Activated T-helper 2 cell treated with anti-CD3 and anti-CD28 coated beads, Interferon-gamma antibody, Interleukin-2, Interleukin-4, amounts not matched to agents 10 μg/mL and 5 μg/mL and 100 μg/mL, durations not matched to agents 14 hours and 24 hours and 36 hours (primary cell): ENCODE measurements at regions of chr3 and their contacts with region 1.

Region 1: GRCh38 chr3:189419038-189419437 is 212.2 kb upstream of the TP63 start:
- DNase-seq: no peak
- H3K4me3 Mint-ChIP-seq: no peak overlapping the region
- H3K27ac Mint-ChIP-seq: no peak overlapping the region
- H3K4me1 Mint-ChIP-seq: peaks cover 37% of the 10 kb centered on the region
- H3K27me3 Mint-ChIP-seq: no peaks in the 10 kb centered on the region

Region 2: DNA sequence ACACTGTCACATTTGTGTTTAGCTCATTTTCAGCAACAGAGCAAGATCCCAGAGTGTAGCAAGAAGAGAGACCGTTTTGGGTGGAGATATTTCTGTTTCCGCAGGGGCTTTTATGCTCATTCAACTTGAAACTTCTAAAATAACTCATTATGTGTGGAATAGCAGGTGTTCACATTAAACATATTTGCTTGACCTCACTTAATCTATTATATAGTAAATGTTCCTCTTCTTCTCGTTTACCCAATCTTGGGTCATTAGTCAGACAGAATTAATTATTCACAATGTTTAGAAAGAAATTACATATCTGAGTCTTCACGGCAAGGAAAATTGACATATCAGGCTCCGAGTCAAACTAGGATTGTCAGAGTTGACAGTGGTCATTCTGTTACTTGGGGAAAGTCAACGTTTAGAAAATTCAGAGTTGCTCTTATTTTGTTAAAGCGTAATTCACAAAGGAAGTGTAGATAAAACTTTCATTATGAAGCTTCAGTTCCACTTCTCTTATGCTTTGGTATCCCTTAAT is 24.4 kb before region 1 on chr3:
- intact Hi-C with region 1: loop called (anchors 2 kb)
- DNase-seq: no peak
- H3K4me3 Mint-ChIP-seq: peak overlapping the region; percentile 6
- H3K27ac Mint-ChIP-seq: peak overlapping the region; percentile 84
- H3K4me1 Mint-ChIP-seq: peaks cover 40% of the 10 kb centered on the region
- H3K27me3 Mint-ChIP-seq: no peaks in the 10 kb centered on the region

Region 3: GRCh38 chr3:189502676-189503257 is 83.7 kb after region 1 on chr3:
- intact Hi-C with region 1: loop called (anchors 2 kb)
- DNase-seq: no peak
- H3K4me3 Mint-ChIP-seq: no peak overlapping the region
- H3K27ac Mint-ChIP-seq: peak overlapping the region; percentile 30
- H3K4me1 Mint-ChIP-seq: peaks cover 41% of the 10 kb centered on the region
- H3K27me3 Mint-ChIP-seq: no peaks in the 10 kb centered on the region

Region 4: GRCh38 chr3:189570916-189571315 is 151.9 kb after region 1 on chr3:
- intact Hi-C with region 1: loop called (anchors 5 kb)
- DNase-seq: no peak
- H3K4me3 Mint-ChIP-seq: peak overlapping the region; percentile 9
- H3K27ac Mint-ChIP-seq: peak overlapping the region; percentile 20
- H3K4me1 Mint-ChIP-seq: peaks cover 70% of the 10 kb centered on the region
- H3K27me3 Mint-ChIP-seq: no peaks in the 10 kb centered on the region